ENCODE measurements at regions of chr14 and their contacts with region 1.

Region 1: GRCh38 chr14:49862089-49862673 is 9.6 kb upstream of the NEMF start:
- DNase-seq: peak; percentile 92
- ATAC-seq: no peak
- H3K4me3 Mint-ChIP-seq: no peak overlapping the region
- H3K27ac Mint-ChIP-seq: no peak overlapping the region
- H3K4me1 Mint-ChIP-seq: peaks cover 26% of the 10 kb centered on the region
- H3K27me3 Mint-ChIP-seq: no peaks in the 10 kb centered on the region

Region 2: GRCh38 chr14:49633640-49634546 is 228.3 kb before region 1 on chr14:
- CTCF ChIA-PET with region 1: interaction called, 28 read pairs
- POLR2A ChIA-PET with region 1: interaction called, 10 read pairs
- DNase-seq: peak; percentile 96
- ATAC-seq: peak; percentile 82
- H3K4me3 Mint-ChIP-seq: peak overlapping the region; percentile 86
- H3K27ac Mint-ChIP-seq: peak overlapping the region; percentile 97
- H3K4me1 Mint-ChIP-seq: peaks cover 49% of the 10 kb centered on the region
- H3K27me3 Mint-ChIP-seq: no peaks in the 10 kb centered on the region

Region 3: DNA sequence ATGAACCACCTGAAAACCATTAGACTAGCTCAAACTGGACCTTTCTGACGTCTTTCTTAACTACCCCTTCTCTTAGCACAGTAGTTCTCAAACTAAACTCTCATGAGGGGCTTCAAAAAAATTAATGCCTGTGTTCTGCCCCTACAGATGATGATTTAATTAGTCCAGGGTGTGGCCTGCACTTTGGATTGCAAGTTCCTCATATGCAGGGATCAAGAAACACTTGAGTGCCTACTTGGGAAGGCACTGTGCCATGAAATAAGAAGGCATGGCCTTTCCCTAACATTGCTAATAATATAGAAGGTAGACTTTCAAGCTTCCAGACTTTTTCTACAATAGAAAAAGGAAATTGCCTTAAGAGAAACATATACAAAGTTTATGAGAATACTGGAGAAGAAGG is 117.0 kb before region 1 on chr14:
- CTCF ChIA-PET with region 1: no interaction called
- POLR2A ChIA-PET with region 1: no interaction called
- DNase-seq: no peak
- ATAC-seq: no peak
- H3K4me3 Mint-ChIP-seq: no peak overlapping the region
- H3K27ac Mint-ChIP-seq: no peak overlapping the region
- H3K4me1 Mint-ChIP-seq: no peaks in the 10 kb centered on the region
- H3K27me3 Mint-ChIP-seq: no peaks in the 10 kb centered on the region

Region 4: DNA sequence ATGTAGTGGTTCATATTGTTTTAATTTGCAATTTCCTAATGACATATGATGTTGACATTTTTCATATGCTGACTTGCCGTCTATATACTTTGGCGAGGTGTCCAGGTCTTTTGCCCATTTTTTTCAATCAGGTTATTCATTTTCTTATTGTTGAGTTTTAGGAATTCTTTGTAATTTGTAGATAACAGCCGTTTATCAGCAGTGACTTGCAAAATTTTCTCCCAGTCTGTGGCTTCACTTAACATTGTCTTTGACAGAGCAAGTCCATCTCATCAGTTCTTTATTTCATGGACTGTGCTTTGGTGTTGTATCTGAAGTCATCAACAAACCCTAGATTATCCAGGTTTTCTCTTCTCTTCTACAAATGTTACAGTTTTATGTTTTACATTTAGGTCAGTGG is 106.8 kb before region 1 on chr14:
- CTCF ChIA-PET with region 1: no interaction called
- POLR2A ChIA-PET with region 1: no interaction called
- DNase-seq: no peak
- ATAC-seq: no peak
- H3K4me3 Mint-ChIP-seq: no peak overlapping the region
- H3K27ac Mint-ChIP-seq: no peak overlapping the region
- H3K4me1 Mint-ChIP-seq: no peaks in the 10 kb centered on the region
- H3K27me3 Mint-ChIP-seq: peaks cover 4% of the 10 kb centered on the region

Region 5: DNA sequence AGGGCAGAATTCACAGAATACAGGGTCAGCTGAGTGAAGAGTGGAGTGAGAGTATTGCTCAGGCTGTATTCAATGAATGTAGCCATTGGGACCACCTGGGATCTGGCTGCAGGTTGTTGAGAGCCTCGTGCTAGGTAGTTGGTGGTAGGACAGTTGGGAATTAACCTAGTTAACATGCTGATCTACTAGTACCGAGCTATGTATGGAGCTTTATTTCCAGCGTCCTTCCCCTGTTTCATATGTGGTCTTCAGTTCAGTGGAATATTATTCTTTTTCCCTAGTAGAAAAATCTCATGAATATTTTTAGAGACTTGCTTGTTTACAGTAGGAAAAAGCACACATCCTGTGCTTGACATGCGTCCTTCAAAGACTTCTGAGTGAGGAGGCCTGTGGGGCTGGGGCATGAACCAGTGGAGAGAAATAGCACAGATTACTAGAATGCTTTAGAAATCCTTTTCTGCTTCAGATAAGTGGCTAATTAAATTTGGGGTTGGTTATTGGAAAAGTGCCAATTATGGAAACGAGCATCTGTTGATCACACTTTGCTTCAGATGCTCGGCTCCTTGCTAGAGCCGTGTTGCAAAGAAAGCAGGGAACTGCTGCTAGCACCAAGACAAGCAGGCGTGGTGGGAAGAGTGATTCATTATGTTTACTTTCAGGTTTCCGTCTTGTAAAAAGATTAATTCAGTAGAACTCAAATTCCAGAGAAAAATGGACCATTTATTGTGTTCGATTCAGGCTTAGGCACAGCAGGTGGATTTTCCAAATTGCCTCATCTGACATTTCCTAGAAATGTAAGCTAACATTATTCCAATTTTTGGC is 84.3 kb after region 1 on chr14:
- CTCF ChIA-PET with region 1: interaction called, 11 read pairs
- POLR2A ChIA-PET with region 1: interaction called, 11 read pairs
- DNase-seq: peak; percentile 37
- ATAC-seq: peak; percentile 52
- H3K4me3 Mint-ChIP-seq: peak overlapping the region; percentile 44
- H3K27ac Mint-ChIP-seq: peak overlapping the region; percentile 93
- H3K4me1 Mint-ChIP-seq: peaks cover 82% of the 10 kb centered on the region
- H3K27me3 Mint-ChIP-seq: no peaks in the 10 kb centered on the region

Region 6: GRCh38 chr14:50038398-50039119 is 176.4 kb after region 1 on chr14:
- CTCF ChIA-PET with region 1: interaction called, 16 read pairs
- POLR2A ChIA-PET with region 1: interaction called, 10 read pairs
- DNase-seq: peak; percentile 44
- ATAC-seq: peak; percentile 22
- H3K4me3 Mint-ChIP-seq: peak overlapping the region; percentile 74
- H3K27ac Mint-ChIP-seq: peak overlapping the region; percentile 98
- H3K4me1 Mint-ChIP-seq: peaks cover 85% of the 10 kb centered on the region
- H3K27me3 Mint-ChIP-seq: no peaks in the 10 kb centered on the region

Region 7: DNA sequence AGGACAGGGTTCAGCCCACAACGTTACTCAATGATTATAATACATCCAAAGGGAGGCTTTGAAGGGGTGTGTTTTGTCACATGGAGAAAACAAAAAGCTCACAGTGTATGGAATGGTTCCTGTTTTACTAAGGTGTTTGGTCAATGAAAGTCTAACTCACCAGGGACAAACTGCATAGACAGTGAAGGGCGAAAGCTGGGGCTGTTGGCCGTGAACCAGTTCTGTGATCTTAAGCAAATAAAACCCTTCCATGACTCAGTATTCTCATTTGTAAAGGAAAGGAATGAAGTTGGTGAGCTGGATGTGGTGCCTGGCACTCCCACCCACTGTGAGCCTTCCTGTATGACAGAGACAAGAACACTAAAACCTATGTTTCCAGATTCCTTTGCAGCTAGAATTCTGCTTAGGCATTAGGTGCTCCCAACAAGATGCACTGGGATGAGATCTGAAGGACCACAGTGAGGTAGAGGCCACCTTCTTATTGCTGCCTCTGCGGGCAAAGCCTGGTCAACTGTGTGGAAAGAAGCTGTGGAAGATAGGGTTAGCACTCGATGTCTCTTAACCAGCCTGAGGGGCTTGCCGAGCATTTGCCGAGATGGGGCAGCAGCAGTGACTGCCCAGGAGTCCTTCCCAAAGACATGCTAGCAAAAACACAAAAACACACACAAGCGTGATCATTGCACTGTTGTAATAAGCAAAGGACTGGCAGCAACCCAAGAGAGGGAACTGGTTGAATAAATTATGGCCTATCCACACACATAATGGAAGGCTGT is 205.7 kb after region 1 on chr14:
- CTCF ChIA-PET with region 1: interaction called, 54 read pairs
- POLR2A ChIA-PET with region 1: interaction called, 68 read pairs
- DNase-seq: no peak
- ATAC-seq: no peak
- H3K4me3 Mint-ChIP-seq: no peak overlapping the region
- H3K27ac Mint-ChIP-seq: no peak overlapping the region
- H3K4me1 Mint-ChIP-seq: peaks cover 59% of the 10 kb centered on the region
- H3K27me3 Mint-ChIP-seq: no peaks in the 10 kb centered on the region

Region 8: DNA sequence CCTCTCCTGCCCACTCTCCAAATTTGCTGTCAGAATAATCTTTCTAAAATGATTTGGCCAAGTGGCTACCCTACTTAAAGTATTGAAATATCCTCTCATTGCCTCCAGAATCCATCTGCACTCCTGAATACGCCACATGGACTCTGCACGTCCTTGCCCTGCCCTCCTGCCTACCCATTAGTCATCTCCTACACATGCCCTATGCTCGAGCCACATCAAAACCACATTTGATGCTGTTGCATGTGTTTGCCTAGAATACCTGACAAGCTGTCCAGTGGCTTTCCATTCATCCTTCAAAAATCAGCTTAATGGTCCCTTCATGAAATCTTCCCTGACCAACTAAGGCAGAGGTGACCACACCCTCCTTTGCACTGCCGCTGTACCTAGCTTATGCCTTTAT is 237.2 kb after region 1 on chr14:
- CTCF ChIA-PET with region 1: interaction called, 181 read pairs
- POLR2A ChIA-PET with region 1: interaction called, 31 read pairs
- DNase-seq: no peak
- ATAC-seq: no peak
- H3K4me3 Mint-ChIP-seq: no peak overlapping the region
- H3K27ac Mint-ChIP-seq: peak overlapping the region; percentile 33
- H3K4me1 Mint-ChIP-seq: peaks cover 85% of the 10 kb centered on the region
- H3K27me3 Mint-ChIP-seq: no peaks in the 10 kb centered on the region

Measured in activated CD8-positive, alpha-beta T cell treated with anti-CD3 and anti-CD28 coated beads, Interleukin-2, amount 10 ng/mL, durations not matched to agents 7 days and 5 days (primary cell).